ENCODE measurements at regions of chr14 and their contacts with region 1.

Region 1: GRCh38 chr14:35416108-35416750 is 11.7 kb upstream of the NFKBIA start:
- DNase-seq: peak in 8 of 10 donors; percentile 15 to 73 (median 37)
- ATAC-seq: peak; percentile 58 to 70
- H3K4me3 Mint-ChIP-seq: peak overlapping the region; percentile 36 to 80 (median 72)
- H3K27ac Mint-ChIP-seq: peak overlapping the region; percentile 85 to 97 (median 94)
- H3K4me1 Mint-ChIP-seq: peaks cover 32 to 47% (median 42%) of the 10 kb centered on the region in 4 donors
- H3K27me3 Mint-ChIP-seq: no peaks in the 10 kb centered on the region

Region 2: GRCh38 chr14:35046048-35046741 is 370.0 kb before region 1 on chr14 and contains the start of gene FAM177A1:
- POLR2A ChIA-PET with region 1: interaction called, 11 read pairs
- DNase-seq: peak; percentile 93 to 100 (median 99)
- ATAC-seq: peak; percentile 81 to 89
- H3K4me3 Mint-ChIP-seq: peak within 1 kb of the TSS; percentile 83 to 98 (median 96)
- H3K27ac Mint-ChIP-seq: peak within 1 kb of the TSS; percentile 98 to 100 (median 99)
- H3K4me1 Mint-ChIP-seq: peaks cover 5 to 33% (median 30%) of the 10 kb centered on the region in 4 donors
- H3K27me3 Mint-ChIP-seq: no peaks in the 10 kb centered on the region
- polyA plus RNA-seq, gene FAM177A1: 32.6 to 59.8 (median 41.0) TPM